Activated CD4-positive, alpha-beta T cell treated with anti-CD3 and anti-CD28 coated beads for 36 hours (primary cell): ENCODE measurements at regions of chr11 and their contacts with region 1.

Region 1: GRCh38 chr11:109946322-109946846 is 146.8 kb upstream of the ZC3H12C start:
- DNase-seq: peak; percentile 82
- ATAC-seq: peak; percentile 98
- H3K4me3 Mint-ChIP-seq: no peak overlapping the region
- H3K27ac Mint-ChIP-seq: no peak overlapping the region
- H3K4me1 Mint-ChIP-seq: peaks cover 4% of the 10 kb centered on the region
- H3K27me3 Mint-ChIP-seq: peaks cover 2% of the 10 kb centered on the region

Region 2: DNA sequence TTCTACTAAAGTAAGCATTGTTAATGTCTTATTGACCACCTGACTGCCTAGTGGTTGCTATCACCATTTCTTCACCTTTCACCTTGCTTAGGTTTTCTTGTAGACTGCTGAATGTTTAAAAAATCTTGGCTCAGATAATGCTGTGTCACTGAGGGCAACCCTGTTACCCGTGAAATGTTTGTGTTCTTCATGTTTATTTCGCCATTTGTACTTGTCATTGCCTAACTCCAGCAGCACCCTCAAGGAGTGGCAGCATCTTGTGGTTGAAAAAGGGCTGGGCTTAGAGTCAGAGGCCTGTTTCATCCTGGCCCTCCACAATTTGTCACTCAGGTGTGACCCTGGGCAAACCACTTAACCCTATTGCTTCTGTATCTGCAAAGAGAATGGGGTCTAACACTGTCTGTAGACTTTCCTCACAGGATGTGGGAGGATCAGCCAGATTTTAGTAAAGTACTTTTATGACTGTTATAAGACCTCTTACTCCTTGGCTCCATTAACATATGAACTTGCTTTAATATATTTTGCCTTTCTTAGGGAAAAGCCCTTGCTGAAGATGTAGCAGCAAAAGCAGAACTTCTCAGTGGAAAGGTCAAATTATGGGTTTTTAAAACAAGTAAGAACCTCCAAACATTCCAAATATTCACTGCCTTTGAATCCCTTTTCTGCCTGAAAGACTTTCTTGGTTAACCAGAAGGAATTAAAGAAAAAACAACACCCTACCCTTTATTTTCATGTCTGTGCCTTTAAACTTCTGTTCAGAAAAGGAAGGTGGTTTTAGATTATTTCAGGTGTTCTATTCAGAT is 678.9 kb before region 1 on chr11:
- CTCF ChIA-PET with region 1: no interaction called
- POLR2A ChIA-PET with region 1: no interaction called
- intact Hi-C with region 1: no loop called
- DNase-seq: no peak
- ATAC-seq: no peak
- H3K4me3 Mint-ChIP-seq: no peak overlapping the region
- H3K27ac Mint-ChIP-seq: no peak overlapping the region
- H3K4me1 Mint-ChIP-seq: no peaks in the 10 kb centered on the region
- H3K27me3 Mint-ChIP-seq: no peaks in the 10 kb centered on the region

Region 3: DNA sequence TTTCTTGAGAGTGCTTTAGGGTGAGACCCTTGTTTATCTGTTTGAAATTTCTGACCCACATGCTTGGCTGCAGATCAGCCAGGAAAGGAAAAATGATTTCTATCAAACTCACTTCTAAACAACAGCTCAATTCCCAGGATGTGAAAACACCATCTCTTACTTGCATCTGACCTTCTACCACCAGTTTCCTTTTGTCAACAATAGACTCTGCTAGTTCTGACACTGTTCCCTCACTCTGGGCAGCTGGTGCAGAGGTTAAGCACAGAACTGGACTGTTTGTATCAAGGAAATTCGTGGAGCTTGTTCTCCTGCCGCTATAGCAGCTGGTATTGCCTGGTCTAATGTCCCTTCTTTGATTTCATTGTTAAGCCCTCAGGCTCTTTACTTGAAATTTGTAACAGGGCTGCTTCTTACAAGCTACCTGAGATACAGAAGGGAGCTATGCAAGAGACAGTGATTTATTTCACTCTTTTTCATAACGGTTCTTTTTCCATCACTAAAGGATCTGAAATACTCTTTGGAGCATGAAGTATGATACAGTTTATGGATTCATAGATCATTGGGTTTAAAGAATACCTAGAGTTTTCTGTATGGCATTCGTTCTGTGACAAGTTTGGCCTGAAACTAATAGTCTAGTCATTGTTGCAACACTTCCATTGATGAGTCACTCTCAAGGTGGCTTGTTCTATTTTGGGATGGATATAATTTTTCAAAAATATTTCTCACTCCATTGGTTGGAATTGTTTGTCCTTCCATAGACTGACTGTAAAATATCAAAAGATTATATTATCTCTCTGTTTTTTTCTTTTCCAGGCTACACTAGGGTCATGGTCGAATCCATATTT is 31.4 kb before region 1 on chr11:
- CTCF ChIA-PET with region 1: no interaction called
- POLR2A ChIA-PET with region 1: no interaction called
- intact Hi-C with region 1: no loop called
- DNase-seq: no peak
- ATAC-seq: no peak
- H3K4me3 Mint-ChIP-seq: no peak overlapping the region
- H3K27ac Mint-ChIP-seq: no peak overlapping the region
- H3K4me1 Mint-ChIP-seq: no peaks in the 10 kb centered on the region
- H3K27me3 Mint-ChIP-seq: no peaks in the 10 kb centered on the region

Region 4: GRCh38 chr11:110092515-110093404 is 146.4 kb after region 1 on chr11 and contains the start of gene ZC3H12C:
- CTCF ChIA-PET with region 1: no interaction called
- POLR2A ChIA-PET with region 1: no interaction called
- intact Hi-C with region 1: loop called (anchors 1 to 5 kb)
- DNase-seq: peak; percentile 74
- ATAC-seq: peak; percentile 73
- H3K4me3 Mint-ChIP-seq: peak within 1 kb of the TSS; percentile 74
- H3K27ac Mint-ChIP-seq: peak within 1 kb of the TSS; percentile 52
- H3K4me1 Mint-ChIP-seq: peaks cover 10% of the 10 kb centered on the region
- H3K27me3 Mint-ChIP-seq: peaks cover 49% of the 10 kb centered on the region
- total RNA-seq, gene ZC3H12C: 1.6 TPM

Region 5: DNA sequence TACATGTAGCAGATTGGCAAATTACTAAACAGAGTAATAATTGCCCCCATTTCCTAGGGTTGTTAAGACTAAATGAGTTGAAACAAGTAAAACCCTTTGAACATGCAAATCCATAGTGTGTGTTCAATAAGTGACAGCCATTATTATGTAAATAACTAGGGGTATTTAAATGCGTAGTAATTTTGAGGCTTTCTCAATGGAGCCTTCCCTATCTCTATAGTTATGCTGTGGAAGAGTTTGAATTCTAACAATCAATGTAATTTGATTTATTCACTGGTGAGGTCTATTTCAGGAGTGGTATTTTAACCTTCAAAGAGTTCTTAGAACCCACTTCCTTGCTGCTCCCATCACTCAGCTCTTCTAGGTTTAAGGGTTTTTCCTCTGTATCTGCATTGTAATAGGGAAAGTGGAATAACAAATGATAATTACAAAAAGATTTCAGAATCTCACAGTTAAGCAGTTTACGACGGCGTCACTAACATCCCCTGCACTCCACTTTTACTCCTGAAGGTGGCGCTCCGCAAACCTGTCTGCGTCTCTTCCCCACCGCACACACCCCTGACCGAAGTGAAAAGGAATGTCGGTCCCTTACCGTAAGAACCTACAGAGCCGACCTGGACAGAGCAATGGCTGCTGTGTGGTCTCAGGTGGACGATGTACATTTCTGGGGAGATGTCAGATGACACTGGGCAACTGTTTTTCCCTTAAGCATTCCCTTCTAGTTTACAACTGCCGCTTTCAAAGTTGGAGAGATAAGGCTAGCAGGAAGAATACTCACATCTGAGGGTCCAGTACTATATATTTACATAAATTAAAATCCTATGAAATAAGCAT is 227.6 kb after region 1 on chr11:
- CTCF ChIA-PET with region 1: interaction called, 3 read pairs
- POLR2A ChIA-PET with region 1: no interaction called
- intact Hi-C with region 1: loop called in 1 of 2 experiments (anchors 5 kb)
- DNase-seq: peak; percentile 84
- ATAC-seq: peak; percentile 88
- H3K4me3 Mint-ChIP-seq: no peak overlapping the region
- H3K27ac Mint-ChIP-seq: no peak overlapping the region
- H3K4me1 Mint-ChIP-seq: peaks cover 6% of the 10 kb centered on the region
- H3K27me3 Mint-ChIP-seq: peaks cover 16% of the 10 kb centered on the region

Region 6: DNA sequence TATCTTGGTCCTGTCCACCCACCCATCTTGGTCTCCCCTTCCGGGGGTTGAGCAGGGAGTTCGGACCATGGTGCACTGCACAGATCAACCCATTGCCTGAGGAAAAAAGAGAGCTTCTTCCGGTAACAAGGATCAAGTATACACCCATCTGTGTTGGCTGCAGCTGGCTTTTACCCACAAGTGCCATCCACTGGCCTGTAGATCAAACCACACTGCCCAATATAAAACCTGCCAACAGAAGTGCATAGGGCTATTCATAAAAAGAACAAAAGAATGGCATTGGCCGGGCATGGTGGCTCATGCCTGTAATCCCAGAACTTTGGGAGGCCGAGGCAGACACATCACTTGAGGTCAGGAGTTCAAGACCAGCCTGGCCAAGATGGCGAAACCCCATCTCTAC is 241.3 kb after region 1 on chr11:
- CTCF ChIA-PET with region 1: no interaction called
- POLR2A ChIA-PET with region 1: no interaction called
- intact Hi-C with region 1: loop called (anchors 5 kb)
- DNase-seq: no peak
- ATAC-seq: no peak
- H3K4me3 Mint-ChIP-seq: no peak overlapping the region
- H3K27ac Mint-ChIP-seq: no peak overlapping the region
- H3K4me1 Mint-ChIP-seq: peaks cover 6% of the 10 kb centered on the region
- H3K27me3 Mint-ChIP-seq: no peaks in the 10 kb centered on the region

Region 7: DNA sequence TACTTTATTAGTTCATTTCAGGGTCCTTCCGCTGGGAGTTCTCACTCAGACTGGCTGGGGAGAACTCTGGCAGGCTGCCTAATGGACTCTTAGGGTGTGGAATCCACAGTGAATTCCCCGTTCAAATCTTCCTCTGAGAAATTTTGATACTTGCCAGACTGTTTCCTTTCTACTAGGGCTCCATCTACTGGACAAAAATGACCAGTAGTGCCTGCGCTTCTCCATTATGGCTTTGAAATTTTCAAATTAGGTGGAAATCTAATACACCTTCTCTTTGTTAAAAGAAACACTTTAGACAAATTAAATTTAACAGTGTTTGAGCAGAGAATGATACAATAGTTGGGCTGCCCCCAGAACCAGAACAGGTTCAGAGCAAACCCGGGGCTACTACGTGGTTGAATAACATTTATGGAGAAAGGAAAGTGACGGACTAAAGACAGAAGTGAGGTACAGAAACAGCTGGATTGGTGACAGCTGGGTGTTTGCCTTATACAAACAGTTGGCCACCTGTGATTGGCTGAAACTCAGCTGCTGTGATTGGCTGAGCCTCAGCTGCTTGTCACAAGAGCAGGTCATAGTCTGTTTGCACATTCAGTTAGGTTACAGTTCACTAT is 430.4 kb after region 1 on chr11:
- CTCF ChIA-PET with region 1: no interaction called
- POLR2A ChIA-PET with region 1: no interaction called
- intact Hi-C with region 1: loop called (anchors 2 kb)
- DNase-seq: peak; percentile 37
- ATAC-seq: peak; percentile 10
- H3K4me3 Mint-ChIP-seq: no peak overlapping the region
- H3K27ac Mint-ChIP-seq: no peak overlapping the region
- H3K4me1 Mint-ChIP-seq: peaks cover 17% of the 10 kb centered on the region
- H3K27me3 Mint-ChIP-seq: peaks cover 3% of the 10 kb centered on the region